ENCODE measurements at regions of chrX and their contacts with region 1.

Region 1: DNA sequence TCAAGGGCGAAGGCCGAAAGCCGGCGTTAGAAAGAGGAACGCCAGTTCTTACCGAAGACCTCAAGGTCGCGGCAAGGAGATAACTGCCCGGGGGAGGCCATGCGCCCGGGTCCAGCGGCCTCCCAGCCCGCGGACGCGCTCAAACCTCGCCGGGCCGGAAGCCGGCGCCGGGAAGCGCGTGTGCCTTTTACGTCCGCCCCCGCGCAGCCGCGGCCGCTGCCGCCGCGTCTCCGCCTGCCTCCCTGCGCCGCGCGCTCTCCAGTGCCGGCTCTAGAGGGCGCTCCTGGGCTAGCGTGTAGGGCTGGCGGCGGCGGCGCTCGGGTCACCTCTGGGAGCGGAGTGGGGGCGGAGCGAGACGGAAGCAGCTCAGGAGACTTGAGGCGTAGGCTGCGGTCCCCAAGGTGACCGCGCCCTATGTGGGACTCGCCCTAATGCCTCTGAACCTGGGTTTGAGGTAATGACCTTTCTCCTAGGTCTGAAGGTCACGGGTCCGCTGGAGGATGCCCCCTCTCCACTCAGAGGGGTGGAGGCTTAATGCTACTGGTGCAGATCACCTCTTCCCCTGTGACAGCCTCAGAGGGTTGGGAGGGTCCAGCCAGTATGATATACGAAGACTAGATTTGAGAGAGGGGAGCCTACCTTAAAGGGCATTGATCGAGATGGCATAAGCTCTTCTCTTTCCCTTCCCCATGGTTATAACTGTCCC is 839 bp downstream of the SLC25A5 start:
- DNase-seq: peak; percentile 74 to 86
- ATAC-seq: peak; percentile 82 to 85
- H3K4me3 ChIP-seq: peak overlapping the region; percentile 79 to 95 (median 89)
- H3K27ac ChIP-seq: peak overlapping the region; percentile 95 to 99 (median 98)
- H3K4me1 ChIP-seq: peaks cover 0 to 6% of the 10 kb centered on the region in 2 donors
- H3K27me3 ChIP-seq: no peaks in the 10 kb centered on the region
- CTCF ChIP-seq: peak; percentile 64 to 85 (median 77)
- POLR2A ChIP-seq: peak; percentile 54 to 64

Region 2: GRCh38 chrX:119235872-119236622 is 233.0 kb before region 1 on chrX and contains the start of gene PGRMC1:
- in situ Hi-C with region 1: no loop called
- intact Hi-C with region 1: loop called (anchors 5 kb)
- DNase-seq: peak; percentile 39 to 57
- ATAC-seq: peak; percentile 80 to 86
- H3K4me3 ChIP-seq: peak within 1 kb of the TSS; percentile 61 to 76 (median 69)
- H3K27ac ChIP-seq: peak within 1 kb of the TSS; percentile 64 to 77 (median 72)
- H3K4me1 ChIP-seq: no peaks in the 10 kb centered on the region
- H3K27me3 ChIP-seq: peaks cover 0 to 4% (median 0%) of the 10 kb centered on the region in 3 donors
- CTCF ChIP-seq: no peak
- POLR2A ChIP-seq: peak; percentile 63 to 64
- total RNA-seq, gene PGRMC1: 11.4 to 14.4 (median 13.0) TPM

Region 3: DNA sequence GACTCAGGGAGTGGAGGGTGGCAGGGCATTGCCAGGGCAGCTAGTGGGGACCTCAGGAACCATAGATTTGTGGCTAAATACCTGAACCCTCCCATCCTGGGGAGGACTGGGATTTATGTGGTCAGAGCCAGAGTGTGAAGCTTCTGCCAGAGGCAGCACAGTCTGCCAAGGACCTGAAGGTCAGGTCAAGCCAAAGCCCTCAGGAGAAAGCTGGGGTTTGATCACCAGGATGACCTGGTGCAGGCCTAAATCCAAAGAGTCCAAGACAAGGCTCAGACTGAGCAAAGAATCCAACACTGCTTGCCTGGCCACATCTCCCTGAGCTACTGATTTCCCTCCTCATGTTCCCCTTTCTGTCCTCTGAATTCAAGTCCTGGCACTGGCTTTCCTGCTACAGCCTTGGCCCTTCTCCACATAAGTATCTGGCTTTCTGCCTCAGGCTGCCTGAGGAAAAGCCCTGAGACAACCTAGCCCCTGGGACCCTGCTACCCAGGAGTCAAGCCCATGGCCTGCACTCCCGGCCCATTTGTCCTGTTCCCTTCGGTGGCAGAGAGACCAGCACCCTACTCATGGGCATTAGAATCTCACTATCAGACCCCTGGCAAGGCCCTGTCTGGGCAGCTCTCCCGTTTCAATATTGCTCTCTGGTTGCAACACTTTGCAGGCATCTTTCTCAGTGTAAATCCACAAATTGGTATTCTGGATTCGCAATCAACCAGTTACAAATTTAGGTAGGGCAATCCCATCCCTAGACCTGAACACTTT is 109.3 kb before region 1 on chrX:
- in situ Hi-C with region 1: no loop called
- intact Hi-C with region 1: no loop called
- DNase-seq: no peak
- ATAC-seq: no peak
- H3K4me3 ChIP-seq: no peak overlapping the region
- H3K27ac ChIP-seq: no peak overlapping the region
- H3K4me1 ChIP-seq: no peaks in the 10 kb centered on the region
- H3K27me3 ChIP-seq: no peaks in the 10 kb centered on the region
- CTCF ChIP-seq: no peak
- POLR2A ChIP-seq: no peak

Region 4: DNA sequence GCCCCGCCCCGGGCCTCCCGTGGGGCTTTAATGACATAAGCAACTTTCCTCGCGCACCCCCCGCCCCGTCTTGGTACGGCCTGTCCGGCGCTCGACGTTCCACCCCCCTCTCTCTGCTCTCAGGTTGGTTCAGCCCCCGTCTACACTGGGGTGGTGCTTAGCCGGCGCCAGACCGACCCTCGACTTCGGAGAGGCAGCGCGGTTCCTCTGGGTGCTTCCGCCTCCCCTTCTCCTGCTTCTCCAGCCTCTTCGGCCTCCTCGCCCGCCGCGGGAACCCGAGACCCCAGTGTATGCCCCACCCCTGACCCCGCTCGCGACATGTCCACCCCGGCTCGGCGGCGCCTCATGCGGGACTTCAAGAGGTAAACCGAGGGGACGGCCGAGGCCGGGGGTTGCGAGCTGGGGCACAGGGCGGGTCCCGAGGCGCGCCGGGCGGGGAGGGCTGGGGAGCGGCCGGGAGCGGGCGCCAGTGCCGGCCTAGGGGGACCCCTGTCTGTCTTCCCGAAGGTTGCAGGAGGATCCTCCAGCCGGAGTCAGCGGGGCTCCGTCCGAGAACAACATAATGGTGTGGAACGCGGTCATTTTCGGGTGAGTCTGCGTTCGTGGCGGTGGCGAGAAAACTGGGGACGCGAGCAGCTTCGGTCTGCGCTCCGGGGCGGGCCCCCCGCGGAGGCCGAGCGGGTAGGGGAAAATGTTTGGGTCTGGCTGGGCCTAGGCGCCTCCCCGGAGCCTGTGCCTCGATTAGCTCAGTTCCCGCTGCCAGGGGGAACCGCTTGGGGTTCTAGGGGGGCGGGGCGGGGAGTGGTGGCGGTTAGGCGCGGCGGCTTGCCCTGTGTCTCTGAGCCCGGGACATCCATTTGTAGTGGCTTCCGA is 105.5 kb after region 1 on chrX and contains the start of gene UBE2A:
- in situ Hi-C with region 1: no loop called
- intact Hi-C with region 1: loop called (anchors 2 kb)
- DNase-seq: peak; percentile 82 to 89
- ATAC-seq: peak; percentile 88 to 95
- H3K4me3 ChIP-seq: peak within 1 kb of the TSS; percentile 66 to 75 (median 72)
- H3K27ac ChIP-seq: peak within 1 kb of the TSS; percentile 84 to 96 (median 94)
- H3K4me1 ChIP-seq: peaks cover 0 to 7% of the 10 kb centered on the region in 2 donors
- H3K27me3 ChIP-seq: no peaks in the 10 kb centered on the region
- CTCF ChIP-seq: peak in 4 of 5 experiments; percentile 21 to 53 (median 38)
- POLR2A ChIP-seq: peak; percentile 80 to 88
- total RNA-seq, gene UBE2A: 28.1 to 41.7 (median 35.9) TPM

Region 5: GRCh38 chrX:119852382-119853353 is 383.6 kb after region 1 on chrX and contains the start of gene UPF3B:
- in situ Hi-C with region 1: no loop called
- intact Hi-C with region 1: loop called (anchors 10 kb)
- DNase-seq: peak; percentile 95 to 97
- ATAC-seq: peak; percentile 98 to 99
- H3K4me3 ChIP-seq: peak within 1 kb of the TSS; percentile 75 to 87 (median 76)
- H3K27ac ChIP-seq: peak within 1 kb of the TSS; percentile 89 to 95 (median 93)
- H3K4me1 ChIP-seq: no peaks in the 10 kb centered on the region
- H3K27me3 ChIP-seq: no peaks in the 10 kb centered on the region
- CTCF ChIP-seq: no peak
- POLR2A ChIP-seq: peak; percentile 22 to 71
- total RNA-seq, gene UPF3B: 4.7 to 6.3 (median 5.7) TPM

Region 6: GRCh38 chrX:119943185-119943988 is 474.3 kb after region 1 on chrX and contains the start of gene NKAP:
- in situ Hi-C with region 1: no loop called
- intact Hi-C with region 1: loop called (anchors 5 kb)
- DNase-seq: peak; percentile 61 to 75
- ATAC-seq: peak; percentile 98 to 99
- H3K4me3 ChIP-seq: peak within 1 kb of the TSS; percentile 61 to 76 (median 66)
- H3K27ac ChIP-seq: peak within 1 kb of the TSS; percentile 81 to 90 (median 86)
- H3K4me1 ChIP-seq: peaks cover 6 to 15% of the 10 kb centered on the region in 2 donors
- H3K27me3 ChIP-seq: no peaks in the 10 kb centered on the region
- CTCF ChIP-seq: no peak
- POLR2A ChIP-seq: peak; percentile 40 to 46
- total RNA-seq, gene NKAP: 3.4 to 5.1 (median 4.3) TPM

Region 7: GRCh38 chrX:120664081-120664480 is 1195.0 kb after region 1 on chrX:
- in situ Hi-C with region 1: no loop called
- intact Hi-C with region 1: no loop called
- DNase-seq: no peak
- ATAC-seq: no peak
- H3K4me3 ChIP-seq: no peak overlapping the region
- H3K27ac ChIP-seq: no peak overlapping the region
- H3K4me1 ChIP-seq: no peaks in the 10 kb centered on the region
- H3K27me3 ChIP-seq: no peaks in the 10 kb centered on the region
- CTCF ChIP-seq: peak in 1 of 5 experiments; percentile 38
- POLR2A ChIP-seq: no peak